MCF 10A (cell line): ENCODE measurements at regions of chr11 and their contacts with region 1.

Region 1: DNA sequence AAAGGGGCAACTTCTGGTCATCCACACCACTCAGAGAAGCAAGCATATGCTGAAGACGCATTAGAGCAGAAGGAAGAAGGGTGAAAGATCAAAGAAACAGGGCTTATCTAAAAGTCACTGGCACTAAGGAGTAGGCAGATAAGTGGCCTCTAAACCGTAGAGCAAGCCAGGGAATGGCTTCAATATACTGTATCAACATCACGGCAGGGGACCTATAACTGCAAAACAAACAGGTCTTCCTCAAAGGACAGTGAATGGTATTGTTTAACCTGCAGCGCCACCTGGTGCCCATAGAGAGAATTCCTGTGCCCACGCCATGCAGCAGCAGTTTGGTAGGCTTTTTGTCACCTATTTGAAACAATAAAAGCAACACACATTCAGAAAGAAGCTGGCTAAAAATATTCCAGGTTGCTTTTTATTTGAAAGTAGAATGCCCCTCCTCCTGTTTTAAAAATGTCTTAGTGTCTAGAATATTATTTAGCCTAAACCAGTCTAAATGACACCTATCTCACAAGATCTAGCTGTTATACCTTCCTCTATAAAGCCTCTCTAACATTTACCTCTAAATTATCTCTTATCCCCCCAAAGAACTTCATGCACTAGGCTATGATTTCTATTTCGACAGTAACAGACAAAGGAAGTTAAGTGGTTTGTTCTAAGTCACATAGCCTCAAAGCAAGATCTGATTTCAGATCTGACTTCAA is 21.8 kb downstream of the SNX19 start:
- DNase-seq: peak; percentile 85
- H3K4me3 Mint-ChIP-seq: no peak overlapping the region
- H3K27ac Mint-ChIP-seq: no peak overlapping the region
- H3K4me1 Mint-ChIP-seq: peaks cover 15% of the 10 kb centered on the region
- H3K27me3 Mint-ChIP-seq: no peaks in the 10 kb centered on the region
- CTCF ChIP-seq: peak; percentile 70

Region 2: GRCh38 chr11:130872981-130873380 is 21.5 kb before region 1 on chr11:
- CTCF ChIA-PET with region 1: interaction called, 47 read pairs
- POLR2A ChIA-PET with region 1: no interaction called
- intact Hi-C with region 1: no loop called
- DNase-seq: peak; percentile 74
- H3K4me3 Mint-ChIP-seq: no peak overlapping the region
- H3K27ac Mint-ChIP-seq: peak overlapping the region; percentile 19
- H3K4me1 Mint-ChIP-seq: peaks cover 9% of the 10 kb centered on the region
- H3K27me3 Mint-ChIP-seq: no peaks in the 10 kb centered on the region
- CTCF ChIP-seq: no peak

Region 3: DNA sequence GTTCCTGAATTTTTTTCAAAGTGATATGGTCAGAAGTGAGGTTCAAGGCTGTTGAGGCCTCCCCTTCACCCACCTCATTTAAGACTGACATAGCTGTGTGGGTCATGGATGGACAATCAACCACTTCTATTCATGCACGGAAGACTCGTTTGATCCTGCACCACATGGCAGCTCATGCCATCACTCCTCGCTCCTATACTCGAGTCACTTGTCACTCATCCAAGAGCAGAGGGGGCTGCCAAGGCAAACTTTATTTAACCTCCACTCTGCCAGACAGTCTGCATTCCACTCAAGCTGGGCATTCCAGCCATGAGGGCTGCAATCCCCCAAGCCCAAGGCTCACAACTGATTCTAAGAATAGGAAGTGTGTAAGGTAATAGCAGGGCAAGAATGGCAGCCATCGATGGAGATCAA is 12.3 kb before region 1 on chr11:
- CTCF ChIA-PET with region 1: interaction called, 56 read pairs
- POLR2A ChIA-PET with region 1: interaction called, 7 read pairs
- intact Hi-C with region 1: no loop called
- DNase-seq: no peak
- H3K4me3 Mint-ChIP-seq: no peak overlapping the region
- H3K27ac Mint-ChIP-seq: peak overlapping the region; percentile 51
- H3K4me1 Mint-ChIP-seq: peaks cover 14% of the 10 kb centered on the region
- H3K27me3 Mint-ChIP-seq: no peaks in the 10 kb centered on the region
- CTCF ChIP-seq: no peak

Region 4: GRCh38 chr11:130916238-130916855 is 21.9 kb after region 1 on chr11 and contains the start of gene SNX19:
- CTCF ChIA-PET with region 1: interaction called, 30 read pairs
- POLR2A ChIA-PET with region 1: interaction called, 3 read pairs
- intact Hi-C with region 1: no loop called
- DNase-seq: peak; percentile 85
- H3K4me3 Mint-ChIP-seq: peak within 1 kb of the TSS; percentile 72
- H3K27ac Mint-ChIP-seq: peak within 1 kb of the TSS; percentile 69
- H3K4me1 Mint-ChIP-seq: peaks cover 12% of the 10 kb centered on the region
- H3K27me3 Mint-ChIP-seq: peaks cover 7% of the 10 kb centered on the region
- CTCF ChIP-seq: peak; percentile 85
- total RNA-seq, gene SNX19: 53.5 and 60.5 TPM in 2 replicates

Region 5: GRCh38 chr11:130999086-130999485 is 104.6 kb after region 1 on chr11:
- CTCF ChIA-PET with region 1: no interaction called
- POLR2A ChIA-PET with region 1: no interaction called
- intact Hi-C with region 1: no loop called
- DNase-seq: peak; percentile 6
- H3K4me3 Mint-ChIP-seq: no peak overlapping the region
- H3K27ac Mint-ChIP-seq: no peak overlapping the region
- H3K4me1 Mint-ChIP-seq: peaks cover 43% of the 10 kb centered on the region
- H3K27me3 Mint-ChIP-seq: no peaks in the 10 kb centered on the region
- CTCF ChIP-seq: no peak